Activated CD8-positive, alpha-beta T cell treated with anti-CD3 and anti-CD28 coated beads for 36 hours (primary cell): ENCODE measurements at regions of chr2 and their contacts with region 1.

Region 1: DNA sequence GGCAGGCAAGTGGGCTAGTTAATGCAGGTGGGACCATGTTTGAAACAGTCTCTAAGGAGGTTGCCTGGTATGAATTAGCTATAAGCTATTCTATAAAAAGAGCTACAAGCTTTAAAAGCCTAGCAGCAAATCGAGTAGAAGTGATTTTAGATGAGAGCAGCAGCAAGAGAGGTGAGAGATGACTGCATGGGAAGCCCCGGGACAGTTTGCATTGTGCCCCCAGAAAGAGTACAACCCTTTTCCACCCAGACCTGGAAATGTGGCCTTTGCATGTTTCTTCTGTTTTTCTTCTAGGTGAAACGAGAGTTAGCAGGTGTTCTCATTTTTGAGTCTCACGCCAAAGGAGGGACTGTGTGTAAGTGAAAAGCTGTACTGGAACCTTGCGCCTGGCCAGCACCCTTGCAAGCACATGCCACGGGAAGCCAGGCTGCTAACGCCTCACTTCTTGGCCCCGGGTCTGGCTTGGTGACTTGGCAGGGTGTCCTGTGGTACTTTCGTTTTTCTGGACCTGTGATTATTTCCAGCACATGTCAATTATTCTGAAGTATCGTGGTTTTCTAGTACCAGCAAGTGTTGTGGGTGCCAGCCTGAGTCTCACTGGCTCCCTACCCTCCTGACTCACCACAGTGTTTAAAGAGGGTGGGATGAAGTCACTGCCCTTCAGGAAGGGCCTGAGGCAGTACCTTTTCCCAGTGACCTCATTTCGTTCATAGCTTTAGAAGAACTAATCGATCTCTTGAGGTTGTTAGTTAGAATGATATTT is 90.3 kb upstream of the MAP3K20 start:
- DNase-seq: peak; percentile 25
- ATAC-seq: peak; percentile 55
- H3K4me3 Mint-ChIP-seq: no peak overlapping the region
- H3K27ac Mint-ChIP-seq: peak overlapping the region; percentile 44
- H3K4me1 Mint-ChIP-seq: peaks cover 14% of the 10 kb centered on the region
- H3K27me3 Mint-ChIP-seq: peaks cover 4% of the 10 kb centered on the region
- CTCF ChIP-seq: no peak

Region 2: DNA sequence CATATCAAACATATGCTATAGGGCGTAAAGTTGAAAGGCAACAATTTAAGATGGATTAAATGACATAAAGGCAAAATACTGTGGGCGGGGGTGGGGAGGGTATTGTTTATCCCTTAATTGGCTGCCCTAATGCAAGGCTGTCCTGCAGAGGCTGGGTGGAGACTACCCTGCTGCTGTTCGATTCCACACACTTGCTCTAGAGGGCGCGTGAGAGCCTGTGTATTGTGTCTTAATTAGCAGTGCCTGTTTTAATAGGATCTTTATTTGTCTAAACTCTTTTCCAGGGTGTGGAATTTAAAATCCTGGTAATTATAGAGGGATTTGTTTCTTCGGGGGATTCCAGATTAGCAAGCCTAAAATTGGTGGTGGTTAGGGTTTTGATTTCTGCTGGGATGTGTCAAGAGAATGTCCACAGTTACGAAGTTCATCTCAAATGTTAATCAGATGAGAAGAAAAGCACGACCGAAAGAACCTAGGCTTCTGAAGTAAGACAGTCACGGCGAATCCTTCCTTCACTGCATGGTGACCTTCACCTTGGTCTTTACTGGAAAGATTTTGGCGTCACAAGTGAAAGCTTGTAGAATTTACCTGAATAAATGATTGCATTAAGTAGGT is 13.2 kb before region 1 on chr2:
- CTCF ChIA-PET with region 1: interaction called, 22 read pairs
- POLR2A ChIA-PET with region 1: interaction called, 4 read pairs
- intact Hi-C with region 1: no loop called
- DNase-seq: peak; percentile 70
- ATAC-seq: peak; percentile 81
- H3K4me3 Mint-ChIP-seq: no peak overlapping the region
- H3K27ac Mint-ChIP-seq: no peak overlapping the region
- H3K4me1 Mint-ChIP-seq: peaks cover 33% of the 10 kb centered on the region
- H3K27me3 Mint-ChIP-seq: peaks cover 5% of the 10 kb centered on the region
- CTCF ChIP-seq: peak; percentile 85